ENCODE measurements at regions of chr15 and their contacts with region 1.

Region 1: GRCh38 chr15:32651229-32651837 is 9.8 kb downstream of the SCG5 start:
- DNase-seq: peak; percentile 71
- H3K4me3 ChIP-seq: no peak overlapping the region
- H3K27ac ChIP-seq: no peak overlapping the region
- H3K4me1 ChIP-seq: peaks cover 0 to 7% of the 10 kb centered on the region in 2 experiments; a peak in 2 of 4 replicates
- H3K27me3 ChIP-seq: no peaks in the 10 kb centered on the region
- CTCF ChIP-seq: peak; percentile 94
- EP300 ChIP-seq: no peak
- RAD21 ChIP-seq: peak; percentile 78

Region 2: DNA sequence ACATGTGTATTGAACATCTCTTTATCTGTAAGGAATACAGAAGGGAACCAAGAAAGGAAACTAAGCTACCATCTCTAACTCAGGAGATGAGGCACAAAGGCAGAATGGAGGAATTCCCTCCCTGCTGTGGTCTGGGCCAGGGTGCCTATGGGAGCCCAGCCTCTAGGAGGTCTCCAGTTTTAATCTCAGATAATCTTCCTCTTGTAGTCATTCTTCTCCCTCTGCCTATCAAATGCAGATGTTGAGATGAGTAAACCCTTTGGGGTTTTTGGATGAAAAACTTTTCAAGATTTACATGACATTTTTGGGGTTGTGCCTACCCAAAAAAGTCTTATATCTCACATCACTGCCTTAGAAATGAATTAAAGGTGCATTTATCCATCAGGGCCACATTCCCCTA is 13.5 kb after region 1 on chr15:
- CTCF ChIA-PET with region 1: interaction called, 44 read pairs
- POLR2A ChIA-PET with region 1: no interaction called
- DNase-seq: no peak
- H3K4me3 ChIP-seq: no peak overlapping the region
- H3K27ac ChIP-seq: no peak overlapping the region
- H3K4me1 ChIP-seq: peaks cover 4 to 14% of the 10 kb centered on the region in 2 experiments; a peak in 3 of 4 replicates
- H3K27me3 ChIP-seq: no peaks in the 10 kb centered on the region
- CTCF ChIP-seq: no peak
- EP300 ChIP-seq: no peak
- RAD21 ChIP-seq: no peak

Region 3: GRCh38 chr15:32683906-32684584 is 32.7 kb after region 1 on chr15:
- CTCF ChIA-PET with region 1: no interaction called
- POLR2A ChIA-PET with region 1: no interaction called
- DNase-seq: no peak
- H3K4me3 ChIP-seq: no peak overlapping the region
- H3K27ac ChIP-seq: peak overlapping the region in 1 of 2 experiments; percentile 98; a peak in 3 of 4 replicates
- H3K4me1 ChIP-seq: peaks cover 7 to 37% of the 10 kb centered on the region in 2 experiments
- H3K27me3 ChIP-seq: no peaks in the 10 kb centered on the region
- CTCF ChIP-seq: no peak
- EP300 ChIP-seq: peak in 1 of 2 experiments; percentile 68; a peak in 1 of 4 replicates
- RAD21 ChIP-seq: no peak

Region 4: DNA sequence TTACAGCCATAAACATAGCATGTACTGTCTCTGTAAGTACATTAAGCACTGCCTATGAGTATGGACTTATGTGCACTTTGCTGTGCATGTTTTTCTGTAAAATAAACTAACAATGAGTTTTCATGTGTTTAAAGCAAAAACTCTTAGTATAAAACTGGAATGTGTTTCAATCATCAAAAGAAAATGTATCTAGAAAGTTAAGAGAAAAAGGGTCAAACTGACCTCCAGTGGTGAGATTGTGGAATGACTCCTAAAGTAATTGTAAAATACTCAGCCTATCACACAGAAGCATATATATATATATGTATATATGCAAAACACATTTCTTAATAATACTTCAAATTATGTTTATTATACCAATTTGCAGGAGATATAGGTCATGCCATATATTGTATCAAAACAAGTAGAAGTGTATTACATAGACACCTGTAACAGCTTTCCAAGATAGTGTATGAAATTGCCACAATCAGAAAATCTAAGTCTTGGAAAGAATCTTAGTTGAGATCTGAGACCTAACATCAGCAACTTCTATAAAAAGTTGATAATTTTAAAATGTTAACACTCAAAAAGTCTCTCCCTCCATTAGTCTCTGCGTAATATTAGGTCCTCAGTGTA is 343.6 kb after region 1 on chr15:
- CTCF ChIA-PET with region 1: interaction called, 62 read pairs
- POLR2A ChIA-PET with region 1: no interaction called
- DNase-seq: peak; percentile 38
- H3K4me3 ChIP-seq: no peak overlapping the region
- H3K27ac ChIP-seq: peak overlapping the region in 1 of 2 experiments; percentile 43; a peak in 1 of 4 replicates
- H3K4me1 ChIP-seq: peaks cover 0 to 10% of the 10 kb centered on the region in 2 experiments; a peak in 2 of 4 replicates
- H3K27me3 ChIP-seq: no peaks in the 10 kb centered on the region
- CTCF ChIP-seq: peak; percentile 73
- EP300 ChIP-seq: no peak
- RAD21 ChIP-seq: peak; percentile 87